Activated B cell treated with CpG ODN at 0.5 μM for 24 hours (primary cell): ENCODE measurements at regions of chr9 and their contacts with region 1.

Region 1: GRCh38 chr9:36400332-36401163 is 479 bp upstream of the RNF38 start:
- DNase-seq: peak; percentile 92
- ATAC-seq: peak; percentile 78
- H3K4me3 Mint-ChIP-seq: peak overlapping the region; percentile 89
- H3K27ac Mint-ChIP-seq: peak overlapping the region; percentile 93
- H3K4me1 Mint-ChIP-seq: peaks cover 38% of the 10 kb centered on the region
- H3K27me3 Mint-ChIP-seq: no peaks in the 10 kb centered on the region
- CTCF ChIP-seq: no peak

Region 2: DNA sequence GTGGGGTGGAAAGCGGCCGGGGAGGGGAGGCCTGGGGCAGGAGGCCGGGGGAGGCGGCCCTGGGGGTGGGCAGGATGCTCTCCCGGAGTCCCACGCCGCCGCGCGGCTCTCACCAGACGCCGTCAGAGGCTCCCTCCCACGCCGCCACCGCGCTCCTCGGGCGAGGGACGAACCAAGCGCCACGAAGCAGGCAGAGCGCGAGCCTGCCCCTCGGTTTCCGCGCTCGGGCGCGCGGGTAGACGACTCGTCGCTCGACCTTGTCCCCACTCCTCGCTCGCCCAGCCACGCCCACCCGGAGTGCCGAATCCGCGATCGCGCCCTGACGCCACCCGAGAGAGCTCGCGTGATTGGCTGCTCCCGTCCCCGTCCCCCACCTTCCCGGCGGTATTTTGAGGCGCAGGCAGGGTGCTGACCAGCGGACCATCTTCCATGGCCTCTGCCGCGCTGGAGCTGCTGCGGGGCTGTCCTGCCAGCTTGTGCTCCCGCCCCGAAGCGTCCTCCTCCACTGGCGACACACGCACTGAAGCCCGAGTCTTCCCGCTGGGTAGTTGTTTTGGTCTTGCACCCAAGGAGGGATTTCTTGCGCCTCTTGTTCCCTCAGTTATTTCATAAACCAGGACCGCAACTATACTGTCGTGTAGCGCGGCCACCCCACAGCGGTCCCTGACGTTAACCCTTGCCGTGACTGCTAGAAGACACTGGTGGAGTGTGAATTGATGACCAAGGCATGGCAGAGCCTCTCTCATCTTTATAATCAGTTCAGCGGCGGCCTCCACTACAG is 142.2 kb before region 1 on chr9 and contains the start of gene GNE:
- CTCF ChIA-PET with region 1: no interaction called
- POLR2A ChIA-PET with region 1: no interaction called
- intact Hi-C with region 1: loop called (anchors 1 kb)
- DNase-seq: peak; percentile 97
- ATAC-seq: peak; percentile 80
- H3K4me3 Mint-ChIP-seq: peak within 1 kb of the TSS; percentile 95
- H3K27ac Mint-ChIP-seq: peak within 1 kb of the TSS; percentile 92
- H3K4me1 Mint-ChIP-seq: peaks cover 16% of the 10 kb centered on the region
- H3K27me3 Mint-ChIP-seq: no peaks in the 10 kb centered on the region
- CTCF ChIP-seq: no peak
- total RNA-seq, gene GNE: 18.1 and 19.3 TPM in 2 replicates

Region 3: GRCh38 chr9:36415822-36416515 is 15.4 kb after region 1 on chr9:
- CTCF ChIA-PET with region 1: no interaction called
- POLR2A ChIA-PET with region 1: no interaction called
- intact Hi-C with region 1: no loop called
- DNase-seq: no peak
- ATAC-seq: no peak
- H3K4me3 Mint-ChIP-seq: no peak overlapping the region
- H3K27ac Mint-ChIP-seq: no peak overlapping the region
- H3K4me1 Mint-ChIP-seq: peaks cover 4% of the 10 kb centered on the region
- H3K27me3 Mint-ChIP-seq: no peaks in the 10 kb centered on the region
- CTCF ChIP-seq: no peak

Region 4: GRCh38 chr9:36521148-36521547 is 120.6 kb after region 1 on chr9:
- CTCF ChIA-PET with region 1: no interaction called
- POLR2A ChIA-PET with region 1: no interaction called
- intact Hi-C with region 1: no loop called
- DNase-seq: no peak
- ATAC-seq: no peak
- H3K4me3 Mint-ChIP-seq: no peak overlapping the region
- H3K27ac Mint-ChIP-seq: no peak overlapping the region
- H3K4me1 Mint-ChIP-seq: no peaks in the 10 kb centered on the region
- H3K27me3 Mint-ChIP-seq: peaks cover 4% of the 10 kb centered on the region
- CTCF ChIP-seq: no peak

Region 5: DNA sequence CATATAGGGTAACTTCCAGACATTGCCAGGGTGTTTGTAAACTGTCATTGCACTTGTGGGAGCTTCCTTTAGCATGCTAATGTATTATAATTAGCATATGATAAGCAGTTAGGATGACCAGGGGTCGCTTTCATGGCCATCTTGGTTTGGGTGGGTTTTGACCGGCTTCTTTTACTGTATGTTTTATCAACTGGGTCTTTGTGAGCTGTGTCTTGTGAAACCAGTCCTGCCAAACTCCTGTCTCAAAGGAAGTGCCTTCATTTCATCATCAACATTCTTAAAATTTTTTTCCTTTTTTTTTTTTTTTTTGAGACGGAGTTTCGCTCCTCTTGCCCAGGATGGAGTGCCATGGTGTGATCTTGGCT is 160.3 kb after region 1 on chr9:
- CTCF ChIA-PET with region 1: interaction called, 181 read pairs
- POLR2A ChIA-PET with region 1: no interaction called
- intact Hi-C with region 1: no loop called
- DNase-seq: no peak
- ATAC-seq: no peak
- H3K4me3 Mint-ChIP-seq: no peak overlapping the region
- H3K27ac Mint-ChIP-seq: no peak overlapping the region
- H3K4me1 Mint-ChIP-seq: no peaks in the 10 kb centered on the region
- H3K27me3 Mint-ChIP-seq: no peaks in the 10 kb centered on the region
- CTCF ChIP-seq: no peak

Region 6: DNA sequence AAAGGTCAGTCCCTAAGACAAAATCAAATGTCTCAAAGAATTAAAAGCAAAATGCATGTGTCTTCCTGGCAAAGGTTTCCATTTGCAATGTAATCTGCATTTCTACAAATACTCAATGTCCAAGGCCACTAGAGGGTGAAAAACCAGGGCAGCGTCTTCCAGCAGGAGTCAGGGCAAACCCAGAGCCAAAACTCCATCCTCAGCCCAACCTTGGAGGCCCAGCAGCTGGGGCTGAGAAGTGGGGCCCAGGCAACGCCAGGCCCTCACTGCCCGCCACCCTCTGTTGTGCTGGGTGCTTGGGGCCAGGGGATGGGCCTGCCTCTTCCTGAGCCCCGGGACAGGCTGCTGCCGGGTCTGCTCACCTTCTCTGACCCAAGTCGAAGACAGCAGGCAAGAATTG is 433.4 kb after region 1 on chr9:
- CTCF ChIA-PET with region 1: no interaction called
- POLR2A ChIA-PET with region 1: no interaction called
- intact Hi-C with region 1: loop called (anchors 10 kb)
- DNase-seq: peak; percentile 13
- ATAC-seq: no peak
- H3K4me3 Mint-ChIP-seq: no peak overlapping the region
- H3K27ac Mint-ChIP-seq: peak overlapping the region; percentile 86
- H3K4me1 Mint-ChIP-seq: peaks cover 67% of the 10 kb centered on the region
- H3K27me3 Mint-ChIP-seq: no peaks in the 10 kb centered on the region
- CTCF ChIP-seq: no peak

Region 7: DNA sequence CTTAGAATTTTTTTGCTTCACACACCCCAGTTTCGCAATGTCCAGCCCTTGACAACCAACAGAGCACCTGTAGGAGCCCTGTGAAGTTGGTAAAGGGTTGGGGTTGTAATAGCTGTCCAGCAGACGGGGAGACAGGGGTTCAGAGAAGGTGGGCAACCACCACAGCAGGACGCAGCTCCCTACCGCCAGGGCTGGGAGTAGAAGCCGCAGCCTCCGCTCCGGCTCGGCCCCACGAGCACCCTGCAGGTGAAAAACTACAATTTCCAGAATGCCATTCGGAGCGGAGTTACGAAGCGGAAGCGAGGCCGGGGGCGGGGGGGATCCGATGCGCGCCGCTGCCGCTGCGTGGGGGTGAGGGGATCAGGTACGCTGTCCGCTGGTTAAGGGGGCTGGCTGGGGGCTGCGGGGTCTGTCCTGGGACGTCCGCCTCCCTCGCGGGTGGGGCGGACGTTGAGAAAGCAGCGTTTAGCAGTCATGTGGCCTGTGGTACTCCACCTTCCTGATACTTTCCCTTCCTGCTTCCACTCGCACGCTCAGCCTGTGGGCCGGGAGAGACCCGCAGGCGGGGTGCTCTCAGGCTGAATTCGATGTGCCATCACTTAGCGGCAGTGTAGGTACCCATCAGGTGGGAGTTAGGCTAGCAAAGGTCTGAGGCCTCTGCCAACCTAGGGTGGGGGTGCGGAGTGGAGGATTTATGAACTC is 1353.1 kb after region 1 on chr9 and contains the start of gene TRMT10B:
- CTCF ChIA-PET with region 1: no interaction called
- POLR2A ChIA-PET with region 1: no interaction called
- intact Hi-C with region 1: loop called (anchors 10 kb)
- DNase-seq: peak; percentile 62
- ATAC-seq: peak; percentile 92
- H3K4me3 Mint-ChIP-seq: peak within 1 kb of the TSS; percentile 96
- H3K27ac Mint-ChIP-seq: peak within 1 kb of the TSS; percentile 89
- H3K4me1 Mint-ChIP-seq: peaks cover 22% of the 10 kb centered on the region
- H3K27me3 Mint-ChIP-seq: no peaks in the 10 kb centered on the region
- CTCF ChIP-seq: no peak
- total RNA-seq, gene TRMT10B: 11.7 and 15.0 TPM in 2 replicates